Caco-2 (cell line): ENCODE measurements at regions of chr3 and their contacts with region 1.

Region 1: DNA sequence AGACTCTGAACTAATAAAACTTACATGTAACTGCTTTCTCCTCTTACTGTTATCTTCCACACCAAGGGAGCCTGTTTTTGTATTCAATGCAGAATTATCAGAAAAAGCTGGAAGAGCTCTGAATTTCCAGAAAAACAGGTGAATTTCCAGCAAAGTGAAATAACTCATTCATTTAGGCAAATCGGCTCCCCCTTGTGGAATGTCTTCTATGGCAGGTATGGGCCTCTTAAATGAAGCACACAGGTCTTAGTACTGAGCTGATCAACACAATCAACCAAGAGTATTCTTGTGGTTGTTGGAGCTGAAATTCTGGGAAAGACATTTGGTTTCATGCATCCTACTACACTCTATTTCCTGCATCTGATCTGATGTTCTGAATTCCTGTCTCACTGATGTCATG is 31.0 kb upstream of the PTPRG start:
- DNase-seq: peak; percentile 54 to 56
- H3K4me3 ChIP-seq: no peak overlapping the region
- H3K4me3 Mint-ChIP-seq: no peak overlapping the region
- H3K27ac Mint-ChIP-seq: no peak overlapping the region
- H3K4me1 ChIP-seq: peaks cover 10% of the 10 kb centered on the region; the same call in 1 of the 2 replicates
- H3K4me1 Mint-ChIP-seq: peaks cover 12% of the 10 kb centered on the region
- H3K27me3 ChIP-seq: no peaks in the 10 kb centered on the region
- H3K27me3 Mint-ChIP-seq: no peaks in the 10 kb centered on the region
- CTCF ChIP-seq: peak; percentile 46 to 79

Region 2: DNA sequence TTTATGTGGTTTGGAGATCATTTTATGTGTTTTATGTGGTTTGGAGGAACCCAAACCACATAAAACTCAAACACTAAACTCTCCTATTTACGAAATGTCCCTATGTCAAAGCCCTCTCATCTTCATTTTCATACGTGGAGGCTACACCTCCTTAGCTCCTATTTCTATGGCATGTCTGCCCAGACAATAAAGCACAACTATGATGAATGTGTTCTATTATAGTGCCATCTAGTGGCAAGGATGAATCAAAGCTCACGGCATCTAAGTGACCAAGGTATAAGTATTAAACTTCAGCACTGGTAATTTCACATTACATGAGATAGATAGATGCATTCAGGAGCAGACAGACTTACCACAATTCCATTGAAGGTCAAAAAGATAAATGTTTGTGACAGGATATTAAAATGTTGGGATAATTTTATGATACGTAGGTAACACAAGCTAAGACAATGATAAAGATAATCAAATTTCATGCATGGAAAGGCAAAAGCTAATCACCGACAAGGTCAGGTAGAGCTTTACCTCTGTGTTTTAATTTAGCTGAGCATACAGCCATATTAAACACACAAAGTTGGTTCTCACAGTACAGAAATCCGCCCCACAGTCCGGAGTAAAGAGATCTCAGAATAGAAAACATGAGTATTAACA is 148.5 kb before region 1 on chr3:
- CTCF ChIA-PET with region 1: interaction called, 13 read pairs
- POLR2A ChIA-PET with region 1: no interaction called
- intact Hi-C with region 1: no loop called
- DNase-seq: peak in 1 of 2 experiments; percentile 40
- H3K4me3 ChIP-seq: no peak overlapping the region
- H3K4me3 Mint-ChIP-seq: peak overlapping the region; percentile 22
- H3K27ac Mint-ChIP-seq: no peak overlapping the region
- H3K4me1 ChIP-seq: no peaks in the 10 kb centered on the region
- H3K4me1 Mint-ChIP-seq: no peaks in the 10 kb centered on the region
- H3K27me3 ChIP-seq: no peaks in the 10 kb centered on the region
- H3K27me3 Mint-ChIP-seq: peaks cover 11% of the 10 kb centered on the region
- CTCF ChIP-seq: peak; percentile 45 to 58

Region 3: DNA sequence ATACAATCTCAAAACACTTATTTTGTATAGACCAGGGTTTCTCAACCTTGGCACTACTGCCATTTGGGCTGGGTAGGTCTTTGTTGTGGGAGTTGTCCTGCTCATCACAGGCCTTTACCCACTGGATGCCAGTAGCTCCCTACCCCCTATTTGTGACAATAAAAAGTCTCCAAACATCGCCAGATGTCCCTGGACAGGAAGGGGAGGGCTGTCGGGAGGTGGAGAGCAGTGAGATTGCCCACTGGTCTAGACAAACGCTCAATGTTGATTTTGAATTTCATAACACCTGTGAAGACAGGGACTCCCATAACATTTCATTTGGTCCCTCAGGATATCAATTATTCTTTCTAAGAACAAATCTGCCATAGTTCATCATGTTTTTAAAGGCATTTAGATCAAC is 120.7 kb before region 1 on chr3:
- CTCF ChIA-PET with region 1: no interaction called
- POLR2A ChIA-PET with region 1: no interaction called
- intact Hi-C with region 1: loop called (anchors 10 kb)
- DNase-seq: no peak
- H3K4me3 ChIP-seq: no peak overlapping the region
- H3K4me3 Mint-ChIP-seq: no peak overlapping the region
- H3K27ac Mint-ChIP-seq: no peak overlapping the region
- H3K4me1 ChIP-seq: no peaks in the 10 kb centered on the region
- H3K4me1 Mint-ChIP-seq: no peaks in the 10 kb centered on the region
- H3K27me3 ChIP-seq: no peaks in the 10 kb centered on the region
- H3K27me3 Mint-ChIP-seq: no peaks in the 10 kb centered on the region
- CTCF ChIP-seq: no peak